ENCODE measurements at regions of chr6 and their contacts with region 1.

Region 1: GRCh38 chr6:142692942-142693341 is 252.0 kb downstream of the HIVEP2 start:
- DNase-seq: peak; percentile 79
- ATAC-seq: peak; percentile 91
- H3K4me3 ChIP-seq: no peak overlapping the region
- H3K4me3 Mint-ChIP-seq: no peak overlapping the region
- H3K27ac ChIP-seq: no peak overlapping the region
- H3K27ac Mint-ChIP-seq: no peak overlapping the region
- H3K4me1 ChIP-seq: peaks cover 4% of the 10 kb centered on the region in 2 donors
- H3K4me1 Mint-ChIP-seq: peaks cover 5% of the 10 kb centered on the region
- H3K27me3 ChIP-seq: no peaks in the 10 kb centered on the region
- H3K27me3 Mint-ChIP-seq: no peaks in the 10 kb centered on the region
- CTCF ChIP-seq: peak; percentile 98

Region 2: DNA sequence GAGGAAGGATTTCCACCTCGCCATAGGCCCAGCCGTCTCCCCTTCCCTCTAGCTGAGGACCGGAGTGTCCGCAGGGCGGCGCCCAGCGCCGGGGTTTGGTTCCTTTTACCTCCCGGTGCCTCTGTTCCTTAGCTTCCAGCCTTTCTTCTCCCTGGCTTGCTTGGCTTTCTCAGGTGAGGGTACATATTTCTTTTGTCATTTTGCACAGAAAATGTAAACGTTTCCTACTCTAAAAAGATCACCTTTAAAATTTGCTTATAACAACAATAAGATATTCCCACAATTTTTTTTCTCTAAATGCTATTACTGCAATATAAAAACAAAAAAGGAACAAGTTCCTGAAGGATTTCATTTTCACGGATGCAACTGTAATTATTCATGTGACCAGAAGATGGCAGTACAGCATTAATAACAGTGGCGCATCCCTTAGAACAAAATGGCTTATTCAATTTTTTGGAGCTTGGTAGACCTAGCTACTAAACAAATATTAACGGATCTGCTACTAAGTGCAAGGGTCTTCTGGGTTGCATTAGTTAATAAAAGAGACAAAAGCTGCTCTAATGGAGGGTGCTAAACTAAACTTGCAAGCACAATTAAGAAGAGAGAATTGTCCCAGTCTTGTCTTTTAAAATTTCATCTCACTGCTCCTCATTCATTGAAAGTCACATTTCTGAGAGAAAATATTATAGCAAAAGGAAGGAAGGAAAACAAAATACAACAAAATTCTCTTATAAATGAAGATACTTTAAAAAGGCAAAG is 218.2 kb before region 1 on chr6:
- CTCF ChIA-PET with region 1: interaction called, 15 read pairs
- POLR2A ChIA-PET with region 1: no interaction called
- intact Hi-C with region 1: no loop called
- DNase-seq: peak; percentile 48
- ATAC-seq: no peak
- H3K4me3 ChIP-seq: no peak overlapping the region
- H3K4me3 Mint-ChIP-seq: no peak overlapping the region
- H3K27ac ChIP-seq: no peak overlapping the region
- H3K27ac Mint-ChIP-seq: no peak overlapping the region
- H3K4me1 ChIP-seq: no peaks in the 10 kb centered on the region
- H3K4me1 Mint-ChIP-seq: no peaks in the 10 kb centered on the region
- H3K27me3 ChIP-seq: peaks cover 0 to 3% (median 0%) of the 10 kb centered on the region in 4 experiments
- H3K27me3 Mint-ChIP-seq: peaks cover 7% of the 10 kb centered on the region
- CTCF ChIP-seq: peak; percentile 96

Region 3: GRCh38 chr6:142756215-142756634 is 63.3 kb after region 1 on chr6:
- CTCF ChIA-PET with region 1: no interaction called
- POLR2A ChIA-PET with region 1: no interaction called
- intact Hi-C with region 1: no loop called
- DNase-seq: no peak
- ATAC-seq: no peak
- H3K4me3 ChIP-seq: no peak overlapping the region
- H3K4me3 Mint-ChIP-seq: no peak overlapping the region
- H3K27ac ChIP-seq: no peak overlapping the region
- H3K27ac Mint-ChIP-seq: no peak overlapping the region
- H3K4me1 ChIP-seq: no peaks in the 10 kb centered on the region
- H3K4me1 Mint-ChIP-seq: peaks cover 4% of the 10 kb centered on the region
- H3K27me3 ChIP-seq: no peaks in the 10 kb centered on the region
- H3K27me3 Mint-ChIP-seq: no peaks in the 10 kb centered on the region
- CTCF ChIP-seq: no peak

Region 4: GRCh38 chr6:142913511-142914047 is 220.6 kb after region 1 on chr6:
- CTCF ChIA-PET with region 1: interaction called, 5 read pairs
- POLR2A ChIA-PET with region 1: no interaction called
- intact Hi-C with region 1: loop called (anchors 1 kb)
- DNase-seq: peak; percentile 92
- ATAC-seq: peak; percentile 95
- H3K4me3 ChIP-seq: peak overlapping the region in 4 of 5 experiments; percentile 9 to 60 (median 24)
- H3K4me3 Mint-ChIP-seq: peak overlapping the region; percentile 91
- H3K27ac ChIP-seq: peak overlapping the region; percentile 93
- H3K27ac Mint-ChIP-seq: peak overlapping the region; percentile 99
- H3K4me1 ChIP-seq: peaks cover 21 to 22% of the 10 kb centered on the region in 2 donors
- H3K4me1 Mint-ChIP-seq: peaks cover 40% of the 10 kb centered on the region
- H3K27me3 ChIP-seq: no peaks in the 10 kb centered on the region
- H3K27me3 Mint-ChIP-seq: no peaks in the 10 kb centered on the region
- CTCF ChIP-seq: peak; percentile 63

Region 5: DNA sequence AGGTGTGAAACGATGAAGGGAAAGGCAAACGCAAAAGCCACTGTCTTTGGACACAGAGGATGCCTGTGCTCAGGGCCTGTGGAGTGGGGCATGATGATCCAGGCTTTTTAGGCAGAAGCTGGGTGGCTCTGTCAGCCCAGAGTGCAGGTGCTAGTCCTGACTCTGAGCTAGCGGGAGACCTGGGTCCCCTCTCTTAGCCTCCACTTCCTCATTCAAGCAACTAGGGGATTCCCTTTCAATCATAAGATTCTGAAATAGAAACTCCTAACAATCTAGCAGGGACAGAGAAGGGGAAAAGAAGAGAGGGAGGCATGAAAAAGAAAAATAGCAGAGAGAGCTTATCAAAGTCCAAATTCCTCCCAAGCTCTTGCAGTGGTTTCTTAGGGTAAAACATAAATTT is 259.7 kb after region 1 on chr6:
- CTCF ChIA-PET with region 1: interaction called, 13 read pairs
- POLR2A ChIA-PET with region 1: no interaction called
- intact Hi-C with region 1: no loop called
- DNase-seq: peak; percentile 87
- ATAC-seq: peak; percentile 81
- H3K4me3 ChIP-seq: no peak overlapping the region
- H3K4me3 Mint-ChIP-seq: peak overlapping the region; percentile 40
- H3K27ac ChIP-seq: peak overlapping the region; percentile 47 to 65
- H3K27ac Mint-ChIP-seq: peak overlapping the region; percentile 66
- H3K4me1 ChIP-seq: peaks cover 27 to 30% of the 10 kb centered on the region in 2 donors
- H3K4me1 Mint-ChIP-seq: peaks cover 43% of the 10 kb centered on the region
- H3K27me3 ChIP-seq: no peaks in the 10 kb centered on the region
- H3K27me3 Mint-ChIP-seq: no peaks in the 10 kb centered on the region
- CTCF ChIP-seq: no peak

Region 6: DNA sequence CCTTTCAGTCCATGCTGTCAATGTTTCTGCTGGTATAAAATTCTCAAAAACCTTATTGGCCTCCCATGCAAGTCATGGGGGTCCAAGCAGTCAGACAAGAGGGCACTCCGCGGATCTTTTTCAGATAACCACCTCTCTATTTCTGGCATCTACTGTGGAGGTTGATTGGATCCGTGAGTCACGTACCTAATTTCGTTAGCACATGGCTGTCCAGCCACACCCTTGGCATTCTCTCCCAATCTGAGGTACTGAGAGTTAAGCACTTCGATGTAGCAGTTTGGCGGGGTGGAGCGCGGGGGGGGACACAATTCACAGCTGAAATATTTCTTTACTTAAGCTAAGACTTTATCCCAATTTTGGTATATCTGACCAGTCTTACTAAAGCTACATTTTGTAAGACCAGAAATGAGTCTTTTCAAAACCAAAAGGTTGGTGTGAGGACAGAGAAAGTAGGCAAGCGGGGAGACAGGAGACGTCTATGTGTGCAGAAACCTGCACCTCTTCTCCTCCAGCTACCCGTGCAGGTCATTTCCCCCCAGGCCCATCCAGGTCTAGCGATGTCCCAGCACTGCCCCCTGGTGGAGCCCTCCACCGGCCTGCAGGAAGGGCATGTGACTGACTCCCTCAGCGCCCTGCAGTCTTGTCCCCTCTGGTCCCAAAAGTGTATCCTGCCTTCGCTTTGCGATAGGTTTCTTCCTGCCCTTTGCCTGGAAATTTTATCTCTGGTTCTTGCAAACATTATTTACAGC is 644.4 kb after region 1 on chr6:
- CTCF ChIA-PET with region 1: interaction called, 32 read pairs
- POLR2A ChIA-PET with region 1: no interaction called
- intact Hi-C with region 1: loop called (anchors 1 kb)
- DNase-seq: peak; percentile 48
- ATAC-seq: peak; percentile 39
- H3K4me3 ChIP-seq: no peak overlapping the region
- H3K4me3 Mint-ChIP-seq: no peak overlapping the region
- H3K27ac ChIP-seq: no peak overlapping the region
- H3K27ac Mint-ChIP-seq: no peak overlapping the region
- H3K4me1 ChIP-seq: no peaks in the 10 kb centered on the region
- H3K4me1 Mint-ChIP-seq: no peaks in the 10 kb centered on the region
- H3K27me3 ChIP-seq: no peaks in the 10 kb centered on the region
- H3K27me3 Mint-ChIP-seq: no peaks in the 10 kb centered on the region
- CTCF ChIP-seq: peak; percentile 59

Region 7: DNA sequence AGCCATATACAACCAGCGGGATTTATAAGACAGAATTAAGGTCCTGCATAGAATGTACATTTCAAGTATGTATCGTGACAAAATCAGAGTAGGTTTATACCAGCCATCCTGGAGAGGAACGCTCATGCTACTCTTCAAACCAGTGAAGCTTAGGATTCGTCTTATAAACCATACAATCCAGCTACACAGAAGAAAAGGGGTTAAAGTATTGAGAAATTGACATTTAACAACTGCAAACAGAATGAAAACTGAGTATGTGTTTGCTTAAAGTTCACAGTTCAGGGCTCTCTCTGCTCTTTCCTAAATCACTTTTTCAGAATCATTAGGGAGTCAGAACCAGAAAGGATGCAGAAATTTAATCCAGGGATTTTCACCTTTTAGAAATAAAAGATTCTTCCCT is 739.6 kb after region 1 on chr6:
- CTCF ChIA-PET with region 1: interaction called, 102 read pairs
- POLR2A ChIA-PET with region 1: no interaction called
- intact Hi-C with region 1: loop called (anchors 1 kb)
- DNase-seq: no peak
- ATAC-seq: no peak
- H3K4me3 ChIP-seq: no peak overlapping the region
- H3K4me3 Mint-ChIP-seq: no peak overlapping the region
- H3K27ac ChIP-seq: no peak overlapping the region
- H3K27ac Mint-ChIP-seq: no peak overlapping the region
- H3K4me1 ChIP-seq: no peaks in the 10 kb centered on the region
- H3K4me1 Mint-ChIP-seq: no peaks in the 10 kb centered on the region
- H3K27me3 ChIP-seq: no peaks in the 10 kb centered on the region
- H3K27me3 Mint-ChIP-seq: no peaks in the 10 kb centered on the region
- CTCF ChIP-seq: no peak